ENCODE measurements at regions of chr10 and their contacts with region 1.

Region 1: DNA sequence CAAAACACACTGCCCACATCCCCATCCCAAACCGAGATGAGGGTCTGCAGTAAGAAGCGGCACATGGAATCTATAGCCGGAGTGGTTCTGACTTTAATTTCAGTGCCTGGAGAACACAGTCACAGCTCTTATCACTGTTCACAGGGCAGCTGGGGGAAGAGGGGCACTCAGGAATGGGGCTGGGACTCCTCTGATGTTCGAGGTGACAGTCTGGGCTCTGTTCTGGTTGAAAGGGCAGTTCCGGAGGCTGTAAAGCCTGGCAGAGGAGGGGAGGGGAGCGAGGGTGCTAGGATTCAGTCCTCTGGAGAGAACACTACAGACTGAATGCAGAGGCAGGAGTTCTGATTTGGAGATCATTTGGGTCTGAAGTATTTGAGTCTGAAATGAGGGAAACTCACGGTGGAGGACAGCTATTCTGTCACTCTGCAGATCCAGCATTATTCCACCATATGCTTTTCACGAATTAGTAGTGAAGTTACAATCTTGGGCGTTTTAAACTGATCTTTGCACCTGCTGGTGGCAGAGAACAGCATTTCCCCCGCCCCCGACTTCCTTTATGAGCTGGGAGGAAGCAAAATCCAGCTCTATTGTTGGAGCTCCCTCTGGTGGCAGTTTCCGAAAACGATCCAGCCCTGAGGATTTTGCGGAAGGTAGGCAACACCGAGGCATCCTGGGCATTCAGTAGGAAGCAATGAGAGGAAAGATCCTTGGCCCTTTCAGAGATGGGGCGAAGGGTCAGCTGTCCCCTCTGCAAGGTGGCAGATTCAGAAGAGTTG is 22.7 kb upstream of the KCNK18 start:
- DNase-seq: peak; percentile 97
- H3K4me3 ChIP-seq: peak overlapping the region; percentile 43 to 59 (median 48)
- H3K27ac ChIP-seq: no peak overlapping the region
- H3K4me1 ChIP-seq: peaks cover 8 to 17% (median 14%) of the 10 kb centered on the region in 4 donors
- H3K27me3 ChIP-seq: peaks cover 0 to 96% (median 21%) of the 10 kb centered on the region in 4 donors
- CTCF ChIP-seq: peak; percentile 71 to 89 (median 81)
- EP300 ChIP-seq: no peak
- POLR2A ChIP-seq: no peak

Region 2: DNA sequence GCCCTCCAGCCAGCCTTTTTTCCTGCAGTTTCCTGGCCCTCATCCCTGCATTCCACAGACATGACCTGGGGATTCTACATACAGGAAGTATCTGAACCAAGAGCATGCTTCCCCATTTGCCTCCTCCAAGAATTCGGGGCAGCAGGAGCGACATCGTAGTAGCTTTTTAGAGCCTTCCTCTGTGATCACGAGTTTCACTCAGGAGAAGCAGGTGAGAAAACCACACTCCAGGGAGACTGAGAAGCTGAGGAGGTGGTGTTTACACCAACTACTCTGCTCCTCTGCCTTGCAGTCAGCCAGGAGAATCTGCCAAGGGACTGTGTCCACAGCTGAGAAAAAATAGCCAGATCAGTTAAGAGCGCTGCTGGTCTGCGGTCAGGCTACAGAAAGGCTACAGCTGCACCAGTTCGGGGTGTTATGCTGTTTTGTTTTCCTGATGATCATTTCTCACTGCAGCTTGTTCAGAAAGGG is 486.4 kb before region 1 on chr10:
- intact Hi-C with region 1: loop called (anchors 10 kb)
- DNase-seq: no peak
- H3K4me3 ChIP-seq: peak overlapping the region in 1 of 4 donors; percentile 4
- H3K27ac ChIP-seq: peak overlapping the region; percentile 11 to 61 (median 18)
- H3K4me1 ChIP-seq: peaks cover 45 to 50% (median 49%) of the 10 kb centered on the region in 4 donors
- H3K27me3 ChIP-seq: no peaks in the 10 kb centered on the region
- CTCF ChIP-seq: no peak
- EP300 ChIP-seq: no peak
- POLR2A ChIP-seq: no peak

Region 3: GRCh38 chr10:116796910-116797513 is 377.6 kb before region 1 on chr10:
- intact Hi-C with region 1: loop called (anchors 2 kb)
- DNase-seq: no peak
- H3K4me3 ChIP-seq: no peak overlapping the region
- H3K27ac ChIP-seq: no peak overlapping the region
- H3K4me1 ChIP-seq: no peaks in the 10 kb centered on the region
- H3K27me3 ChIP-seq: peaks cover 0 to 47% (median 0%) of the 10 kb centered on the region in 4 donors
- CTCF ChIP-seq: peak; percentile 80 to 89 (median 88)
- EP300 ChIP-seq: no peak
- POLR2A ChIP-seq: no peak

Region 4: GRCh38 chr10:116891208-116891607 is 283.4 kb before region 1 on chr10:
- intact Hi-C with region 1: no loop called
- DNase-seq: peak; percentile 39
- H3K4me3 ChIP-seq: no peak overlapping the region
- H3K27ac ChIP-seq: no peak overlapping the region
- H3K4me1 ChIP-seq: peaks cover 5 to 21% (median 8%) of the 10 kb centered on the region in 4 donors
- H3K27me3 ChIP-seq: no peaks in the 10 kb centered on the region
- CTCF ChIP-seq: no peak
- EP300 ChIP-seq: no peak
- POLR2A ChIP-seq: no peak

Region 5: GRCh38 chr10:117107238-117107637 is 67.4 kb before region 1 on chr10:
- intact Hi-C with region 1: no loop called
- DNase-seq: no peak
- H3K4me3 ChIP-seq: no peak overlapping the region
- H3K27ac ChIP-seq: no peak overlapping the region
- H3K4me1 ChIP-seq: no peaks in the 10 kb centered on the region
- H3K27me3 ChIP-seq: peaks cover 0 to 21% (median 0%) of the 10 kb centered on the region in 4 donors
- CTCF ChIP-seq: no peak
- EP300 ChIP-seq: no peak
- POLR2A ChIP-seq: no peak

Region 6: GRCh38 chr10:117216611-117217195 is 42.1 kb after region 1 on chr10:
- intact Hi-C with region 1: no loop called
- DNase-seq: no peak
- H3K4me3 ChIP-seq: peak overlapping the region; percentile 49 to 61 (median 56)
- H3K27ac ChIP-seq: no peak overlapping the region
- H3K4me1 ChIP-seq: peaks cover 12 to 17% (median 15%) of the 10 kb centered on the region in 4 donors
- H3K27me3 ChIP-seq: peaks cover 0 to 80% (median 14%) of the 10 kb centered on the region in 4 donors
- CTCF ChIP-seq: peak in 2 of 3 experiments; percentile 97 to 99
- EP300 ChIP-seq: no peak
- POLR2A ChIP-seq: no peak

Region 7: DNA sequence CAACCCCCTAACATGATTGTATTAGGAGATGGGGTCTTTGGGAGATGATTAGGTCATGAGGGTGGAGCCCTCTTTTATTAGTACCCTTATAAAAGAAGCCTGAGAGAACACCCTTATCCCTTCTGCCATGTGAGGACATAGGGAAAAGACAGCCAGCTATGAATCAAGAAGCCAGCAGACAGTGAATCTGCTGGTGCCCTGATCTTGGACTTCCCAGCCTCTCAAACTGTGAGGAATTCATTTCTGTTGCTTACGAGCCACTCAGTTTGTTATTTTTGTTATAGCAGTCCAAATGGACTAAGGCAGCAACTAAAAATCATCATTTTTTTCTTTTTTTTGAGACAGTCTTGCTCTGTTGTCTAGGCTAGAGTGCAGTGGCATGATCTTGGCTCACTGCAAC is 126.0 kb after region 1 on chr10:
- intact Hi-C with region 1: no loop called
- DNase-seq: no peak
- H3K4me3 ChIP-seq: no peak overlapping the region
- H3K27ac ChIP-seq: no peak overlapping the region
- H3K4me1 ChIP-seq: no peaks in the 10 kb centered on the region
- H3K27me3 ChIP-seq: no peaks in the 10 kb centered on the region
- CTCF ChIP-seq: no peak
- EP300 ChIP-seq: no peak
- POLR2A ChIP-seq: no peak

Measured in esophagus muscularis mucosa (tissue), 4 donors.